Kidney (tissue), 22 donors: ENCODE measurements at regions of chr19 and their contacts with region 1.

Region 1: GRCh38 chr19:7104747-7105447 is 35.4 kb downstream of the ZNF557 start:
- DNase-seq: no peak
- H3K4me3 ChIP-seq: no peak overlapping the region
- H3K27ac ChIP-seq: no peak overlapping the region
- H3K4me1 ChIP-seq: peaks cover 0 to 2% (median under 1%) of the 10 kb centered on the region in 3 donors
- H3K27me3 ChIP-seq: no peaks in the 10 kb centered on the region
- CTCF ChIP-seq: no peak

Region 2: GRCh38 chr19:6849876-6850275 is 255.0 kb before region 1 on chr19:
- intact Hi-C with region 1: no loop called
- DNase-seq: peak in 1 of 5 donors; percentile 50
- H3K4me3 ChIP-seq: no peak overlapping the region
- H3K27ac ChIP-seq: no peak overlapping the region
- H3K4me1 ChIP-seq: no peaks in the 10 kb centered on the region
- H3K27me3 ChIP-seq: no peaks in the 10 kb centered on the region
- CTCF ChIP-seq: no peak

Region 3: GRCh38 chr19:7159105-7159933 is 54.4 kb after region 1 on chr19:
- intact Hi-C with region 1: no loop called
- DNase-seq: peak in 3 of 5 donors; percentile 14 to 83 (median 46)
- H3K4me3 ChIP-seq: no peak overlapping the region
- H3K27ac ChIP-seq: peak overlapping the region; percentile 41 to 73
- H3K4me1 ChIP-seq: no peaks in the 10 kb centered on the region
- H3K27me3 ChIP-seq: no peaks in the 10 kb centered on the region
- CTCF ChIP-seq: no peak

Region 4: GRCh38 chr19:7340959-7341837 is 236.3 kb after region 1 on chr19:
- intact Hi-C with region 1: loop called (anchors 10 kb)
- DNase-seq: peak; percentile 89 to 93 (median 91)
- H3K4me3 ChIP-seq: no peak overlapping the region
- H3K27ac ChIP-seq: no peak overlapping the region
- H3K4me1 ChIP-seq: peaks cover 0 to 6% (median 0%) of the 10 kb centered on the region in 3 donors
- H3K27me3 ChIP-seq: no peaks in the 10 kb centered on the region
- CTCF ChIP-seq: peak; percentile 98